Activated naive CD4-positive, alpha-beta T cell treated with anti-CD3 and anti-CD28 coated beads for 36 hours (primary cell): ENCODE measurements at regions of chr15 and their contacts with region 1.

Region 1: DNA sequence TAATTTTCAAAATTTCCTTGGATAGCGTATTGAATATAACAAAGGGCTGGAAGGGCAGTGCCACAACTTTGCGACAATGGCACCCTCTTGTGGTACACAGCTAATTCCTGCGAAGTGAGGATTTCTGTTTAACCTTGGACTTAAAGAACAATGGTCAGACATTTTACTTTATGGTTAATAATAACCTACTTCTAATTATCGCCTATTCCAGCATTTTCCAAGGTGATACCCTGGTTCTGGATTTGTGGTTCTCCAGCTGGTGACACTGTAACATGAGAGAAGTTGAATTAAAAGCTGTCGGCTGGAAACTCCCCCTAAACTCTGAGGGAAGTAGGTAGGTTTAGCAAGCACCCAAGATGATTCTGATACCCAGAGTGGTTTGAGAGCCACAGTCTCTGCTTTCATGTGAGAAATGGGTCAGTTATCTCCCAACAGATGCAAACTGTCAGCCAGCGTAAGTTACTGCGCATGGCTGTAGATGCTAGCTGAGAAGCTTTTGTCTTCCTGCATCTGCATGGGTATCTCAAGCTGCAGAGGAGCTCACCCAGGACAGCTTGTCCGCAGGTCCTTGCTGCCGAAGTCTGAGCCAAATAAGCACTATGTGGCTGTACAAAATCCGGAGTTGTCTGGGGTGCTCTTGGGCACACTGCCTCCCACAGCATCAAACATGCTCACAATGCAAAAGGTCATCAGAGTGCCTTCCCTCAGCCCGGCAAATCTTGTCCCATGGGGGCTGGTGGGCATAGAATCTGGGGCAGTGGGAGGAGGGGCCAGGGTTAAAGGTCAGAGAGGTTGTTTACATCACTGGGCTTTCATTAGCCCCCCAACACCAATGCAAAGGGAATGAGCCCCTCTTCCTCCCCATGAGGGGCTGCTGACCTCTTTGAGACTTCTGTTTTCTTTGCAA is 6.6 kb upstream of the CHSY1 start:
- DNase-seq: peak; percentile 73
- H3K4me3 Mint-ChIP-seq: no peak overlapping the region
- H3K27ac Mint-ChIP-seq: no peak overlapping the region
- H3K4me1 Mint-ChIP-seq: peaks cover 19% of the 10 kb centered on the region
- H3K27me3 Mint-ChIP-seq: peaks cover 6% of the 10 kb centered on the region

Region 2: GRCh38 chr15:101014921-101015841 is 243.3 kb before region 1 on chr15:
- CTCF ChIA-PET with region 1: interaction called, 58 read pairs
- intact Hi-C with region 1: loop called (anchors 1 kb)
- DNase-seq: peak; percentile 81
- H3K4me3 Mint-ChIP-seq: no peak overlapping the region
- H3K27ac Mint-ChIP-seq: no peak overlapping the region
- H3K4me1 Mint-ChIP-seq: no peaks in the 10 kb centered on the region
- H3K27me3 Mint-ChIP-seq: no peaks in the 10 kb centered on the region

Region 3: DNA sequence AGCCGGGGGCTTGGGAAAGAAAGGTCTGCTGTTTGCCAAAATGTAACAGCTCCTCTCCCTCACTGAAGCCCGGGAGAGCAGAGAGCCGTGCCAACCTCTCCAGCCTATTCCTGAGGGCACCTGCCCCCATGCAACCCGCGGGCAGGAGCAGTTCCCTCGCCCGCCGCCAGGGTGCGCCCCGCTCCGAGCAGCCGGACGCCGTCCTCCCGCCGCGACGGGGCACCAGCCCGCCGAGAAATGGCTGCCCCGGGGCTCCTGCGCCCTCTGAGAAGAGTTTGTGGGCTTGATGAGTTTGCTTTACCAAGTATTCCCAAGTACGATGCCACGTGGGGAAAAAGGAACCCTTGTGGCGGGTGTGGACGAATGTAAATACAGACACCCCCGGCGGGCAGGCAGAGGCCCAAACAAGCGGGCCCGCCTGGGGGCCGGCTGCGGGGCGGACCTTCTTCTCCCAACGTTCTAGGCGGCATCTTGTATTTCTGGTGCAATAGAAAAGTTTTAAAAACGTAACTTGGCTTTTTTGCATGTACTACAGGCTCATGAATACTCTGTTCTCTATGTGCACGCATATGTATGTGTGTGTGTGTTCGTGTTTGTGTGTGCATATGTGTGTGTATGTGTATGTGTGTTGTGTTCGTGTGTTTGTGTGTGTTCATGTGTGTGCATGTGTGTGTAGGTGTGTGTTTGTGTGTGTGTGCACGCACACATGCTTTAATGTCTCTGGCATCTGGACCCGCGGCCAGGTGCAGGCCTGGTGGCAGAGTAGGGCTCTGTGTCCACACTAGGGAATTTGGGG is 169.5 kb before region 1 on chr15:
- CTCF ChIA-PET with region 1: interaction called, 89 read pairs
- intact Hi-C with region 1: loop called (anchors 1 kb)
- DNase-seq: peak; percentile 83
- H3K4me3 Mint-ChIP-seq: no peak overlapping the region
- H3K27ac Mint-ChIP-seq: no peak overlapping the region
- H3K4me1 Mint-ChIP-seq: no peaks in the 10 kb centered on the region
- H3K27me3 Mint-ChIP-seq: no peaks in the 10 kb centered on the region

Region 4: GRCh38 chr15:101121511-101122090 is 136.9 kb before region 1 on chr15:
- CTCF ChIA-PET with region 1: interaction called, 18 read pairs
- intact Hi-C with region 1: loop called (anchors 1 kb)
- DNase-seq: peak; percentile 73
- H3K4me3 Mint-ChIP-seq: peak overlapping the region; percentile 36
- H3K27ac Mint-ChIP-seq: no peak overlapping the region
- H3K4me1 Mint-ChIP-seq: peaks cover 43% of the 10 kb centered on the region
- H3K27me3 Mint-ChIP-seq: no peaks in the 10 kb centered on the region